ENCODE measurements at regions of chr6 and their contacts with region 1.

Region 1: GRCh38 chr6:165850434-165851019 is 187.5 kb upstream of the PDE10A start:
- DNase-seq: peak; percentile 64 to 84 (median 78)
- ATAC-seq: peak; percentile 62 to 82 (median 69)
- H3K4me3 ChIP-seq: peak overlapping the region in 8 of 12 donors; percentile 3 to 42 (median 32)
- H3K27ac ChIP-seq: no peak overlapping the region
- H3K4me1 ChIP-seq: peaks cover 0 to 26% (median 6%) of the 10 kb centered on the region in 12 donors
- H3K27me3 ChIP-seq: peaks cover 12 to 42% (median 24%) of the 10 kb centered on the region in 9 donors
- CTCF ChIP-seq: peak; percentile 96 to 100 (median 98)
- POLR2A ChIP-seq: no peak

Region 2: GRCh38 chr6:165439928-165440554 is 410.5 kb before region 1 on chr6:
- intact Hi-C with region 1: loop called (anchors 2 to 5 kb)
- DNase-seq: no peak
- ATAC-seq: peak in 2 of 4 donors; percentile 48 to 63
- H3K4me3 ChIP-seq: no peak overlapping the region
- H3K27ac ChIP-seq: no peak overlapping the region
- H3K4me1 ChIP-seq: peaks cover 0 to 5% (median 0%) of the 10 kb centered on the region in 12 donors
- H3K27me3 ChIP-seq: no peaks in the 10 kb centered on the region
- CTCF ChIP-seq: peak; percentile 49 to 78 (median 68)
- POLR2A ChIP-seq: no peak

Region 3: GRCh38 chr6:165676435-165677068 is 174.0 kb before region 1 on chr6:
- intact Hi-C with region 1: loop called in 1 of 10 experiments (anchors 5 kb)
- DNase-seq: peak in 3 of 5 donors; percentile 61 to 80 (median 66)
- ATAC-seq: peak; percentile 55 to 98 (median 90)
- H3K4me3 ChIP-seq: no peak overlapping the region
- H3K27ac ChIP-seq: peak overlapping the region in 3 of 12 donors; percentile 22 to 50 (median 24)
- H3K4me1 ChIP-seq: peaks cover 0 to 10% (median 1%) of the 10 kb centered on the region in 12 donors
- H3K27me3 ChIP-seq: no peaks in the 10 kb centered on the region
- CTCF ChIP-seq: peak in 10 of 12 donors; percentile 23 to 59 (median 36)
- POLR2A ChIP-seq: no peak

Region 4: GRCh38 chr6:165729307-165729936 is 121.1 kb before region 1 on chr6:
- intact Hi-C with region 1: loop called (anchors 1 to 2 kb)
- DNase-seq: no peak
- ATAC-seq: peak in 2 of 4 donors; percentile 51 to 63
- H3K4me3 ChIP-seq: no peak overlapping the region
- H3K27ac ChIP-seq: no peak overlapping the region
- H3K4me1 ChIP-seq: peaks cover 0 to 5% (median 0%) of the 10 kb centered on the region in 12 donors
- H3K27me3 ChIP-seq: no peaks in the 10 kb centered on the region
- CTCF ChIP-seq: peak; percentile 71 to 92 (median 86)
- POLR2A ChIP-seq: no peak

Region 5: DNA sequence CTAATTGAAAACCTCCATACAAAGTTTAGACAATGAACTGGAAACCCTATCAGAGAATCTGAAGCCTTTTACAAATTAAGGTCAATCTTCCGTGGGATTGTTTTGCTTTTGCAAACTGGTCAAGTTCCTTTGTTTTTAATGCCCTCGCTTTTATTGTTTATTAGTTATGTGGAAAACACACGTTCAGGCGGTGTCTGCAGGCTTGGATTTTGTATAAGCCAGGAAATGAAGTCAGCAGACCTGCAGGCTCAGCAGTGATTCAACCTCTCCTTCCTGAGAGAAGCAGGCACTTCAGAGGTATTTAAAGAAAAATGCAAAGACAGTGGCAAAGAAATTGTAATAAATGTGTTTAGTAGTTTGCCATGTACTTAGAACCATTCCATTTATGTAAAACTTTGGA is 84.1 kb before region 1 on chr6:
- intact Hi-C with region 1: loop called in 1 of 10 experiments (anchors 5 kb)
- DNase-seq: peak in 1 of 5 donors; percentile 23
- ATAC-seq: peak in 1 of 4 donors; percentile 81
- H3K4me3 ChIP-seq: no peak overlapping the region
- H3K27ac ChIP-seq: peak overlapping the region in 9 of 12 donors; percentile 12 to 77 (median 67)
- H3K4me1 ChIP-seq: peaks cover 0 to 25% (median 13%) of the 10 kb centered on the region in 12 donors
- H3K27me3 ChIP-seq: no peaks in the 10 kb centered on the region
- CTCF ChIP-seq: no peak
- POLR2A ChIP-seq: no peak

Region 6: GRCh38 chr6:165804331-165805066 is 46.0 kb before region 1 on chr6:
- intact Hi-C with region 1: loop called in 1 of 10 experiments (anchors 5 kb)
- DNase-seq: peak in 3 of 5 donors; percentile 40 to 52 (median 49)
- ATAC-seq: peak in 1 of 4 donors; percentile 56
- H3K4me3 ChIP-seq: peak overlapping the region in 11 of 12 donors; percentile 14 to 53 (median 50)
- H3K27ac ChIP-seq: peak overlapping the region in 4 of 12 donors; percentile 17 to 55 (median 40)
- H3K4me1 ChIP-seq: peaks cover 0 to 27% (median 11%) of the 10 kb centered on the region in 12 donors
- H3K27me3 ChIP-seq: peaks cover 0 to 4% (median 0%) of the 10 kb centered on the region in 9 donors
- CTCF ChIP-seq: no peak
- POLR2A ChIP-seq: no peak

Region 7: GRCh38 chr6:166786704-166787293 is 936.3 kb after region 1 on chr6:
- intact Hi-C with region 1: no loop called
- DNase-seq: no peak
- ATAC-seq: peak in 3 of 4 donors; percentile 39 to 62 (median 57)
- H3K4me3 ChIP-seq: no peak overlapping the region
- H3K27ac ChIP-seq: no peak overlapping the region
- H3K4me1 ChIP-seq: peaks cover 0 to 3% (median 0%) of the 10 kb centered on the region in 12 donors
- H3K27me3 ChIP-seq: no peaks in the 10 kb centered on the region
- CTCF ChIP-seq: peak; percentile 64 to 82 (median 75)
- POLR2A ChIP-seq: no peak